HCT116 (cell line): ENCODE measurements at regions of chr1 and their contacts with region 1.

Region 1: GRCh38 chr1:216221260-216221700 is 202.0 kb downstream of the USH2A start:
- DNase-seq: peak; percentile 7
- ATAC-seq: peak; percentile 70
- H3K4me3 ChIP-seq: peak overlapping the region; percentile 23 to 27; a peak in 3 of 4 replicates
- H3K27ac ChIP-seq: no peak overlapping the region
- H3K4me1 ChIP-seq: no peaks in the 10 kb centered on the region
- H3K27me3 ChIP-seq: no peaks in the 10 kb centered on the region
- CTCF ChIP-seq: peak; percentile 11 to 56 (median 50); a peak in 4 of 6 replicates
- POLR2A ChIP-seq: no peak
- RAD21 ChIP-seq: peak; percentile 39; the same call in 1 of the 2 replicates

Region 2: GRCh38 chr1:216238844-216239243 is 17.6 kb after region 1 on chr1:
- CTCF ChIA-PET with region 1: interaction called, 10 read pairs
- POLR2A ChIA-PET with region 1: no interaction called
- RAD21 ChIA-PET with region 1: no interaction called
- intact Hi-C with region 1: no loop called
- DNase-seq: no peak
- ATAC-seq: no peak
- H3K4me3 ChIP-seq: no peak overlapping the region
- H3K27ac ChIP-seq: no peak overlapping the region
- H3K4me1 ChIP-seq: no peaks in the 10 kb centered on the region
- H3K27me3 ChIP-seq: no peaks in the 10 kb centered on the region
- CTCF ChIP-seq: no peak
- POLR2A ChIP-seq: no peak
- RAD21 ChIP-seq: no peak